T-cell (primary cell): ENCODE measurements at regions of chrX and their contacts with region 1.

Region 1: GRCh38 chrX:119734897-119735339 is 23.5 kb upstream of the SOWAHD start:
- DNase-seq: no peak
- ATAC-seq: no peak
- H3K4me3 ChIP-seq: no peak overlapping the region
- H3K4me3 Mint-ChIP-seq: no peak overlapping the region
- H3K27ac ChIP-seq: no peak overlapping the region
- H3K27ac Mint-ChIP-seq: no peak overlapping the region
- H3K4me1 ChIP-seq: no peaks in the 10 kb centered on the region
- H3K4me1 Mint-ChIP-seq: no peaks in the 10 kb centered on the region
- H3K27me3 ChIP-seq: no peaks in the 10 kb centered on the region
- H3K27me3 Mint-ChIP-seq: peaks cover 0 to 14% of the 10 kb centered on the region in 2 donors

Region 2: GRCh38 chrX:119647552-119648420 is 87.1 kb before region 1 on chrX:
- CTCF ChIA-PET with region 1: interaction called in 1 of 2 experiments, 5 read pairs
- POLR2A ChIA-PET with region 1: interaction called in 1 of 2 experiments, 13 read pairs
- DNase-seq: peak in 33 of 35 experiments; percentile 5 to 75 (median 45)
- ATAC-seq: peak; percentile 55 to 86 (median 68)
- H3K4me3 ChIP-seq: no peak overlapping the region
- H3K4me3 Mint-ChIP-seq: peak overlapping the region in 2 of 3 donors; percentile 29 to 34
- H3K27ac ChIP-seq: peak overlapping the region; percentile 57
- H3K27ac Mint-ChIP-seq: peak overlapping the region; percentile 80 to 86
- H3K4me1 ChIP-seq: peaks cover 0 to 29% of the 10 kb centered on the region in 2 experiments
- H3K4me1 Mint-ChIP-seq: peaks cover 27 to 44% (median 36%) of the 10 kb centered on the region in 3 donors
- H3K27me3 ChIP-seq: no peaks in the 10 kb centered on the region
- H3K27me3 Mint-ChIP-seq: no peaks in the 10 kb centered on the region

Region 3: GRCh38 chrX:119693040-119693995 is 41.6 kb before region 1 on chrX and contains the start of gene SEPTIN6:
- CTCF ChIA-PET with region 1: interaction called, 7 to 13 read pairs
- POLR2A ChIA-PET with region 1: no interaction called
- DNase-seq: peak; percentile 74 to 91 (median 83)
- ATAC-seq: peak; percentile 71 to 75 (median 74)
- H3K4me3 ChIP-seq: peak within 1 kb of the TSS; percentile 84 to 95
- H3K4me3 Mint-ChIP-seq: peak within 1 kb of the TSS; percentile 93 to 96 (median 94)
- H3K27ac ChIP-seq: peak within 1 kb of the TSS; percentile 68
- H3K27ac Mint-ChIP-seq: peak within 1 kb of the TSS; percentile 94 to 98
- H3K4me1 ChIP-seq: peaks cover 16 to 30% of the 10 kb centered on the region in 2 experiments
- H3K4me1 Mint-ChIP-seq: peaks cover 31 to 48% (median 33%) of the 10 kb centered on the region in 3 donors
- H3K27me3 ChIP-seq: no peaks in the 10 kb centered on the region
- H3K27me3 Mint-ChIP-seq: no peaks in the 10 kb centered on the region
- total RNA-seq, gene SEPTIN6: 171 to 269 (median 206) TPM

Region 4: GRCh38 chrX:119871599-119872395 is 136.9 kb after region 1 on chrX and contains the starts of genes NDUFA1 and RNF113A:
- CTCF ChIA-PET with region 1: no interaction called
- POLR2A ChIA-PET with region 1: no interaction called
- DNase-seq: peak; percentile 62 to 92 (median 84)
- ATAC-seq: peak; percentile 90 to 95 (median 90)
- H3K4me3 ChIP-seq: peak within 1 kb of the TSS; percentile 69 to 84
- H3K4me3 Mint-ChIP-seq: peak within 1 kb of the TSS; percentile 93 to 100 (median 100)
- H3K27ac ChIP-seq: peak within 1 kb of the TSS; percentile 96
- H3K27ac Mint-ChIP-seq: peak within 1 kb of the TSS; percentile 97 to 100
- H3K4me1 ChIP-seq: peaks cover 2 to 20% of the 10 kb centered on the region in 2 experiments
- H3K4me1 Mint-ChIP-seq: peaks cover 14 to 37% (median 35%) of the 10 kb centered on the region in 3 donors
- H3K27me3 ChIP-seq: no peaks in the 10 kb centered on the region
- H3K27me3 Mint-ChIP-seq: no peaks in the 10 kb centered on the region
- total RNA-seq, gene NDUFA1: 56.3 to 60.8 (median 58.0) TPM
- total RNA-seq, gene RNF113A: 23.4 to 40.5 (median 36.5) TPM

Region 5: GRCh38 chrX:120213436-120214265 is 478.7 kb after region 1 on chrX:
- CTCF ChIA-PET with region 1: no interaction called
- POLR2A ChIA-PET with region 1: no interaction called
- DNase-seq: peak in 34 of 35 experiments; percentile 14 to 71 (median 37)
- ATAC-seq: peak; percentile 34 to 74 (median 67)
- H3K4me3 ChIP-seq: no peak overlapping the region
- H3K4me3 Mint-ChIP-seq: no peak overlapping the region
- H3K27ac ChIP-seq: no peak overlapping the region
- H3K27ac Mint-ChIP-seq: no peak overlapping the region
- H3K4me1 ChIP-seq: no peaks in the 10 kb centered on the region
- H3K4me1 Mint-ChIP-seq: peaks cover 3 to 12% (median 8%) of the 10 kb centered on the region in 3 donors
- H3K27me3 ChIP-seq: no peaks in the 10 kb centered on the region
- H3K27me3 Mint-ChIP-seq: peaks cover 0 to 11% of the 10 kb centered on the region in 2 donors